ENCODE measurements at regions of chr15 and their contacts with region 1.

Region 1: DNA sequence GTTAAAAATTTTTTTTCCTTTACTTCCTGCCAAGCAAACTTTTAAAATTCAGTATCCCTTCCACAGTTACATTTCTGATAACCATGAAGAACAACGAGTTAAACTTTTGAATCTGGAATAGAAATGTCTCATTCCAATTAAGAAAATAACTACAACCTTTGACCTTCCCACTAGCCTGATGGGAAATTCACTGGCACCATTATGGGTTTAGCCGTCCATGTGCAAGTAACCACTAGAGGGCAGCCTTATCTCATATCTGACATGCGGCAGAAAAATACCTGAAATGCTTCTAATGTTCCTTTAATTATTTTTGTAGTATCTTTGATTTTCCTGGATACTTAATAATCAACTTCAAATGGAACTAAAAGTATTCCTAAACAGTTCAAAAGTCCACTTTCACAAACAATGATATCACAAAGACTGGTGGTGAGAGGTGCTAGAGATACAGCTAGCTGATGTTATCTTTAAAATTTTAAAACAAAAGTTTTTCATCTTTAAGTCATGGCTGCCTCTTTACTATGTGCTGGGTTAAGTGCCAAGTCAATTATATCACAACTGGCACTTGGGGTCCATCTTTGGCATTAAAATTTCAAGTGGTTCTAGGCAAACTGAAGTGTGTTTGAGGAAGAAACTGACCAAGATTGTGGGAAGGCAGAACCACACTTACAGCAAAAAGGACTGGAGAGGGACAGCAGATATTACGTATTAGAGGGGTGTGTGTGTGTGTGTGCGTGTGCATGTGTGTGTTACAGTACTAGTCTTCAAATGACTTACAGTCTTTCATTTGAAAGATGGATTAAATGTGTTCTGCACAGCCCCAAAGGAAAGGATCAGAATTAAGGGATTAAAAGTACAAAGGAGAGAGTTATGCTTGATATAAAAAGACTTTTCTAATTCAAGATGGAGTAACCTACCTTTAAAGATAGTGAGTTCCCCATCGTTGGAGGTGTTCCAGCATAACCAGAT is 107.1 kb upstream of the ICE2 start:
- DNase-seq: no peak
- H3K4me3 ChIP-seq: no peak overlapping the region
- CTCF ChIP-seq: peak; percentile 72

Region 2: GRCh38 chr15:60573936-60574335 is 12.1 kb before region 1 on chr15:
- CTCF ChIA-PET with region 1: interaction called, 43 read pairs
- POLR2A ChIA-PET with region 1: no interaction called
- DNase-seq: no peak
- H3K4me3 ChIP-seq: no peak overlapping the region
- CTCF ChIP-seq: no peak

Region 3: DNA sequence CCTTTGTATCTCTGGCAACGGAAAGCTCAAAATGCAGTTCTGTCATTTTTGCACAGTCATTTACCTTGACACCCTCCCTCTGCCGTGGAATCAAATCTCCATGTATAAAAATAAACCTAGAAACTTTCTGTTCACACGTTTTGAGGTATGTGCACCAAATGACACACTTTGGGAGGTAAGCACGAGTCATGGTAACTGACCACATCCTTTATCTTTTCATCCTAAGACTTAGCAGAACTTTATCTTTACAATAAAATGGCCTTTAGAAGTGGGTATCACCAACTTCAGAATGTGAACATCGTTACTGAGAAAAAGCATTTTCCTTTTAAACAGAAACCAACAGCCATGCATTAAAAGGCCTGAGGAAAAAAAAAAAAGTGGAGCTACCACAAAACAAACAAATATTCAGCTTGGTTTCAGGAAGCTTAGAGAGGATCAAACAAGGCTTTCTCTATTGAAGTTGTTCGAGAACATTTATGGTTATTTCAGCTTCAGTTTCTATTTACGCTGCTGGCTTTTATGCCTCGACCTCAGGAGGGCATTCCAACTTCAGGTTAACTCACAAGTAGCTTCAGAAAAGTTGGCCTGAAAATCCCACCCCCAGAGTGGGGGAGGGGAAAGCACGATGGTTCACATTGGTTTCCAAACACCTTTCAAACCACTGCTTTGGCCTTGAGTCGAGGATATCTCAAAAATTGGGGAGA is 64.0 kb after region 1 on chr15:
- CTCF ChIA-PET with region 1: no interaction called
- POLR2A ChIA-PET with region 1: no interaction called
- DNase-seq: no peak
- H3K4me3 ChIP-seq: no peak overlapping the region
- CTCF ChIP-seq: no peak

Region 4: GRCh38 chr15:60899322-60899966 is 313.4 kb after region 1 on chr15:
- CTCF ChIA-PET with region 1: interaction called, 15 read pairs
- POLR2A ChIA-PET with region 1: no interaction called
- DNase-seq: no peak
- H3K4me3 ChIP-seq: no peak overlapping the region
- CTCF ChIP-seq: no peak

Region 5: DNA sequence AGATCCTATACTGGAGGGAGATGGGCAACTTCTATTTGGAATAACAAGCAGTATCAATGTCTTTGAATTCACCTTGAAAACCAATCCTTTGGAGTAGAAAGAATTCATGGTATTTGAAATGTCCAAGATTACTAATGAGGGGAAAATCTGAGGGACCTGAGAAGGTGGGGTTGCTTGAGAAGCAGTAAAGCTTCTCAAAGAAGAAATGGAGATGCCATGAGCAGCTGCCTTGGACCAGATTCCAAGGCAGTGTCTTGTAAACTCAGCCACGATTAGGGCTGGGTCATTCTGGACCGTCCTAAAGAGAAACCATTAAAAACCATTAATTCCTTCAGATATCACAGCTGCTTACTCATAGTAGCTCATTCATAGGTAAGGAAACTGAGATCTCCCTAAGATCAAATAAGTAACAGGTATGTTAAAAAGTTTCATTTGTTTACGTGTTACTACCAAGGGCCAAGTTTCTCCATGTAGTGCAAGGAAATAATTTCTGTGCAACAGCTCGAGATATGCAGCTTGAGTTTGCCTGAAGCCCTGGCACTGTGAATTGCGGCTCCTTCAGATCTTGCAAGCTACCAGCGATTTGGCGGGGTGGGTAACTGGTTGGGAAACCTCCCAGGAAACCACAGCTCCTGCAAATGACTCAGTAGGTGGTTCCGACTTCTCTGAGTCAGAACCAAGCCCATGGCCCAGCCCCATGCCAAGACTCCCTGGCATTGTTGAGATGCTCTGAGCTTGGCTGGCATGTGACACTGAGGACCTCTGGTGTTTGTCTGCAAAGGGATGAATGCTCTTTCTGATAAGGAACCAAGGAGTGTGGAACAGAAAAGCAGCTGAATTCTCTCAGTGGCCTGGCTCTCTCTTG is 346.3 kb after region 1 on chr15:
- CTCF ChIA-PET with region 1: interaction called, 13 read pairs
- POLR2A ChIA-PET with region 1: no interaction called
- DNase-seq: peak; percentile 21
- H3K4me3 ChIP-seq: no peak overlapping the region
- CTCF ChIP-seq: no peak

Region 6: GRCh38 chr15:61051569-61052031 is 465.6 kb after region 1 on chr15:
- CTCF ChIA-PET with region 1: interaction called, 29 read pairs
- POLR2A ChIA-PET with region 1: no interaction called
- DNase-seq: peak; percentile 67
- H3K4me3 ChIP-seq: no peak overlapping the region
- CTCF ChIP-seq: peak; percentile 81